Endothelial cell of umbilical vein (primary cell): ENCODE measurements at regions of chr20 and their contacts with region 1.

Region 1: DNA sequence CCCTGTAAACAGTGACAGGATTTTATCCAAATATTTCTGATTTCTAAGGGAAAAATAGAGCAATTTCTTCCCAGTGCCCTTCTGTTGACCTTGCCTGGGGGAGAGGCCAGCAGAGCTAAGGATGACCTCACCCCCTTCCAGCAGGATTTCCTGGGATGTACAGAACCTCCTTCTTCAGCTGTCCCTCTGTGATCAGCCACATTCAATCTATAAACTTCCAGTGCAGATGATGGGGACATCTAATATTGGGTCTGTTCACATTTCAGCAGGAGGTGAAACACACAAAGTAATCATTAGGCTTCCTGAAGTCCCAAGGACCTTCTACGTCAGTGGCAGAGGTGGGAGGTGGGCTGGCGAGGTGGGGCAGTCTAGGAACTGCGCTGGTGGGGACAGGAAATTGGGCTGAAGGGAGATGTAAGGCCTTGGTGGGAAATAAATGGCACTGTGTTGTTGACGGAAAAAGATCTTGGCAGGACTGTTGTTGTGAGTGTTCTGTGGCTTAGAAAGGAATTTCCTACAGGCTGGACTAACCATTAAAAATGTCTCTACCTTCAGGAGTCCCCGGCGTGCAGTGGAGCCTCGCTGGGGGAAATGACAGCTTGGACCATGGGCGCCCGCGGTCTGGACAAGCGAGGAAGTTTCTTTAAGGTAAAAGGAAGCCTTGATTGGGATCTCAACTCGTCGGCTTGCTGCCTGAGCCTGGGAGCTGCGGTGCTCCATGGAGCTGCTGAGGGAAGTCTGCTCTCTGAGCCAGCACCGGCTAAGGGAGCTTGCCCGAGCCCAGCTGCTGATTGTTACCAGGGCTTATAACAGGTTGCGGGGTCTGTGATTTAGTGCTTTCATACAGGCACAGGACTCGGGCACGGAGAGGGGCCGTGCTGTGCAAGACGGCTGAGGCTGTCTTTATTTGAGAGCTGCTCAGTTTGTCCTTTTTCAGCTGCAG is 127.9 kb upstream of the NAA20 start:
- DNase-seq: peak; percentile 97
- H3K4me3 ChIP-seq: peak overlapping the region; percentile 63 to 98 (median 85)
- H3K27ac ChIP-seq: peak overlapping the region; percentile 91
- H3K4me1 ChIP-seq: peaks cover 50% of the 10 kb centered on the region
- H3K27me3 ChIP-seq: no peaks in the 10 kb centered on the region
- CTCF ChIP-seq: no peak
- POLR2A ChIP-seq: peak; percentile 69

Region 2: GRCh38 chr20:19571996-19572395 is 317.3 kb before region 1 on chr20:
- CTCF ChIA-PET with region 1: no interaction called
- POLR2A ChIA-PET with region 1: no interaction called
- dilution Hi-C with region 1: no loop called
- intact Hi-C with region 1: no loop called
- DNase-seq: no peak
- H3K4me3 ChIP-seq: no peak overlapping the region
- H3K27ac ChIP-seq: no peak overlapping the region
- H3K4me1 ChIP-seq: no peaks in the 10 kb centered on the region
- H3K27me3 ChIP-seq: no peaks in the 10 kb centered on the region
- CTCF ChIP-seq: no peak
- POLR2A ChIP-seq: no peak

Region 3: GRCh38 chr20:19692685-19693119 is 196.6 kb before region 1 on chr20:
- CTCF ChIA-PET with region 1: interaction called, 12 read pairs
- POLR2A ChIA-PET with region 1: no interaction called
- dilution Hi-C with region 1: no loop called
- intact Hi-C with region 1: loop called (anchors 2 kb)
- DNase-seq: peak; percentile 68
- H3K4me3 ChIP-seq: no peak overlapping the region
- H3K27ac ChIP-seq: no peak overlapping the region
- H3K4me1 ChIP-seq: peaks cover 5% of the 10 kb centered on the region
- H3K27me3 ChIP-seq: no peaks in the 10 kb centered on the region
- CTCF ChIP-seq: peak; percentile 84 to 87
- POLR2A ChIP-seq: no peak

Region 4: DNA sequence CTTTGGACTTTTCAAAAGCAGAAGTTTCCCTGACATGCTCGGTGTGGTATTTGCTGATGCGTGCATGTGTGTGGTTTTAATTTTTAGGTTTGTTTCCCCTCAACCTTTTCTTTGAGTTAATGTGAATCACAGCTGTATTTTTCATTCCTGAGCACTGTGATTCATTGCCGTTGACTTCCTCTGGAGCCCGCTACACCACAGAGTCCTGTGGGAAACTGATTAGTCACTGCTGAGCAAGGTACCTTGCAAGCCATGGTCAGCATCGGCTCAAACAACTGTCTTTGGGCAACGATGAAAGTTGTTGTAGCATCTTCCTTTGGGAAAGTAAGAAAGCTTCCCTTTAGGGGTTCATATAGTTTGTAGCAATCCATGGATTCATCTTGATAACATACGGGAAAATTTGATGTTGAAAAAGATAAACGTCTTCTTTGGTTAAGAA is 73.7 kb before region 1 on chr20:
- CTCF ChIA-PET with region 1: interaction called, 13 read pairs
- POLR2A ChIA-PET with region 1: interaction called, 13 read pairs
- dilution Hi-C with region 1: loop called (anchors 5 kb)
- intact Hi-C with region 1: loop called (anchors 1 kb)
- DNase-seq: peak; percentile 98
- H3K4me3 ChIP-seq: no peak overlapping the region
- H3K27ac ChIP-seq: peak overlapping the region; percentile 96
- H3K4me1 ChIP-seq: peaks cover 59% of the 10 kb centered on the region
- H3K27me3 ChIP-seq: no peaks in the 10 kb centered on the region
- CTCF ChIP-seq: no peak
- POLR2A ChIP-seq: peak; percentile 20

Region 5: GRCh38 chr20:19934792-19935491 is 45.7 kb after region 1 on chr20:
- CTCF ChIA-PET with region 1: interaction called, 8 read pairs
- POLR2A ChIA-PET with region 1: interaction called, 3 read pairs
- dilution Hi-C with region 1: no loop called
- intact Hi-C with region 1: loop called (anchors 1 kb)
- DNase-seq: peak; percentile 94
- H3K4me3 ChIP-seq: peak overlapping the region in 1 of 3 experiments; percentile 31
- H3K27ac ChIP-seq: peak overlapping the region; percentile 79
- H3K4me1 ChIP-seq: peaks cover 75% of the 10 kb centered on the region
- H3K27me3 ChIP-seq: no peaks in the 10 kb centered on the region
- CTCF ChIP-seq: no peak
- POLR2A ChIP-seq: no peak

Region 6: GRCh38 chr20:19995220-19995863 is 106.1 kb after region 1 on chr20:
- CTCF ChIA-PET with region 1: interaction called, 14 read pairs
- POLR2A ChIA-PET with region 1: no interaction called
- dilution Hi-C with region 1: no loop called
- intact Hi-C with region 1: loop called (anchors 1 kb)
- DNase-seq: peak; percentile 65
- H3K4me3 ChIP-seq: no peak overlapping the region
- H3K27ac ChIP-seq: no peak overlapping the region
- H3K4me1 ChIP-seq: peaks cover 48% of the 10 kb centered on the region
- H3K27me3 ChIP-seq: no peaks in the 10 kb centered on the region
- CTCF ChIP-seq: peak; percentile 66 to 74
- POLR2A ChIP-seq: no peak